Right ventricle myocardium inferior (tissue), 1 donor: ENCODE measurements at regions of chr2 and their contacts with region 1.

Region 1: GRCh38 chr2:42102024-42102590 is 54.3 kb downstream of the PKDCC start:
- DNase-seq: peak; percentile 83
- ATAC-seq: peak; percentile 59

Region 2: DNA sequence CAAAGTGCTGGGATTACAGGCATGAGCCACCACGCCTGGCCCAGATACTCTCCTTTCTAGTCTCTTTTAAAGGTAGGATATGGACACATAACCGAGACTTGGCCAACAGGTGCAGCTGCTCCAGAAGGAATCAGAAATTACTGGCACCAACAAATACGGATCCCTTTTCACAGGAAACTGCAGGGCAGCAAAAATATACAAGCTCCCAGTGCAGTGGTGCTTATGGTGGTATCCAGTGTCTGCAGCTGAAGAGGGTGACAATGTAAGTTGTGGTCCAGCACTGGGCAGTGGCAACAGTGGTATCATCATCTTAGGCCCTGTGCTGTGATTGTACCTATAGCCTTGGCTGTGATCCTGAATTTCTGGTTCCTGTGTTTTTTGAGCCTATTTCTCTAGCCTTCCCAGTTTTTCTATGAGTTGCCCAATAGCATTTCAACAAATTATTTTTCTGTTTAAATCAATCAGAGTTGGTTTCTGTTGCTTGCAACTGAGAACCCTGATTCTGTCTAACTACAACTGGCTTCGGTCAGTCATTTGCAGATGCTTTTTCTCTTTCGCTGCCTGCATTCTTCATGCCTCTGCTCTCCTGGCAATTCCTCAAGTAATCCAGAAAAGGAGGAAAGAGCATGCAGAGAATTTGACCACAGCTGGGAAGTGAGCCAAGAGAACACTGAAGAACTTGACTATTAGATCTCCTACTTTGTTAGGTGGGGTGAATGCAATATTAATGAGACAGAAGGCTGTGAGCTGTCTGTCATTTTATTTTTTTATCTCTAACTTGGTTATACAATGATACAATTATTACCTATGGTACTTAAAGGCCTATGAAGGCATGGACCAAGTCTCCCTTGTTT is 36.3 kb after region 1 on chr2:
- intact Hi-C with region 1: loop called (anchors 5 kb)
- DNase-seq: no peak
- ATAC-seq: peak; percentile 40

Region 3: GRCh38 chr2:42169100-42169873 is 67.2 kb after region 1 on chr2 and contains the start of gene EML4:
- intact Hi-C with region 1: loop called (anchors 2 kb)
- DNase-seq: peak; percentile 96
- ATAC-seq: peak; percentile 97
- total RNA-seq, gene EML4: 5.6 TPM